ENCODE measurements at regions of chr3 and their contacts with region 1.

Region 1: GRCh38 chr3:41997702-41998550 is 36.0 kb upstream of the ULK4 start:
- DNase-seq: peak in 1 of 2 experiments; percentile 75
- H3K4me3 ChIP-seq: no peak overlapping the region
- H3K27ac ChIP-seq: no peak overlapping the region
- H3K4me1 ChIP-seq: peaks cover 0 to 2% (median under 1%) of the 10 kb centered on the region in 4 experiments; a peak in 3 of 7 replicates
- H3K27me3 ChIP-seq: no peaks in the 10 kb centered on the region
- CTCF ChIP-seq: peak in 2 of 3 experiments; percentile 50 to 68; a peak in 3 of 4 replicates
- EP300 ChIP-seq: no peak
- POLR2A ChIP-seq: no peak
- RAD21 ChIP-seq: peak; percentile 48 to 65

Region 2: DNA sequence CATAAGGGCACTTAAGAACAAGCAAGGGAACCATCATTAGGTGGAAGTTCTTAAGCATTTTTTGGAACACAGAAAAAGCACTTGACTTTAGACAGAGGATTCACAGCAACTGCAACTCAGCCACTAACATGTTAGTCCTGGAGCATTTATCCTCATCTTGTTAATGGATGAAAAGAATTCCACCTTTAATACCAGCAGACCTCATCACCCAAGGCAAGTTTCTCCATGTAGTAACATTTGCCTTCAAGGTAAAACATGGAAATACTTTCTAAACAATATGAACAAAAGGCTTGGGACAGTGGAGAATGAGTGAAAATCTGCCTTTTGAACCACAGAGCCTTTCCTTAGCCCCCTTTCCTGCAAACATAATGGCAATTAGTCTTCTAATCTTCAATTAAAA is 28.0 kb before region 1 on chr3:
- CTCF ChIA-PET with region 1: interaction called, 16 read pairs
- POLR2A ChIA-PET with region 1: no interaction called
- DNase-seq: no peak
- H3K4me3 ChIP-seq: no peak overlapping the region
- H3K27ac ChIP-seq: no peak overlapping the region
- H3K4me1 ChIP-seq: no peaks in the 10 kb centered on the region
- H3K27me3 ChIP-seq: no peaks in the 10 kb centered on the region
- CTCF ChIP-seq: no peak
- EP300 ChIP-seq: no peak
- POLR2A ChIP-seq: no peak
- RAD21 ChIP-seq: no peak

Region 3: DNA sequence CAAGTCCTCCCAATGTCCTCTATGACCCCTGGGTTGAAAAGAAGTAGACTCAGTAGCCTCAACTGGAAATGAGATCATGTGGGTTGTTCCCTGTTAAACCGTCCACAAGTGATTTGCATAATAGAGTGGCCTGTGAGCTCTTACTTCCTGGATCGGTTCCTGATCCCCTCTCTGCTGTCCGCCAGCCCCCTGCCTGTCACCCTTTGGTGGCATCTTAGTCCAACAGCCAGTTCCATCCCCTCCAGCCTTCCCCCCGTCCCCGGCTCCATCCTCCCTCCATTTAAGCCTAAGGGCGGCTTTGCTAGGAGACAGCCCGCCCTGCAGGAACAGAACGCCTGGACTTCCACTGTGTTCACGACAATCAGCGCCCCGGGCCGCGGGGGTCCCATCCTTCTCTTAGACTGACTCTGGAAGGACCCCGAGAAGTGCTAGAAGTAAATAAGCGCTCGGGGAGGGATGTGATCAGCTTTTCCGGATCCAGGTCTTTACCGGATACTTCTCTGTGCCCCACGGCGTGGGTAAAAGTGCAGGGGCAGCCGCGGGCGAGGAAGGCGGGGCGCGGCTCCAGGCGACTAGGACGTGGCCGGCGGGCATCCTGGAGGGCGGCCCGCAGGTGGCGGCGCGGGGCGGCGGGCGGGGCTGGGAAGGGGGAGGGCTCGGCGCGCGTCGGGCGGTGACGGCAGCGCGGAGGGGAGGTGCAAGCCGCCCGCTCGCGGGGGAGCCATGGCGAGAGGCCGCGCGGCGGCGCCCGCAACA is 15.2 kb after region 1 on chr3:
- CTCF ChIA-PET with region 1: interaction called, 42 read pairs
- POLR2A ChIA-PET with region 1: no interaction called
- DNase-seq: peak in 1 of 2 experiments; percentile 72
- H3K4me3 ChIP-seq: peak overlapping the region; percentile 75 to 95 (median 80)
- H3K27ac ChIP-seq: no peak overlapping the region
- H3K4me1 ChIP-seq: peaks cover 5 to 7% (median 6%) of the 10 kb centered on the region in 4 experiments; a peak in 6 of 7 replicates
- H3K27me3 ChIP-seq: peaks cover 0 to 7% (median 4%) of the 10 kb centered on the region in 4 experiments; a peak in 4 of 7 replicates
- CTCF ChIP-seq: no peak; a peak in 1 of 4 replicates
- EP300 ChIP-seq: no peak
- POLR2A ChIP-seq: peak in 1 of 2 experiments; percentile 23; a peak in 1 of 3 replicates
- RAD21 ChIP-seq: no peak

Region 4: DNA sequence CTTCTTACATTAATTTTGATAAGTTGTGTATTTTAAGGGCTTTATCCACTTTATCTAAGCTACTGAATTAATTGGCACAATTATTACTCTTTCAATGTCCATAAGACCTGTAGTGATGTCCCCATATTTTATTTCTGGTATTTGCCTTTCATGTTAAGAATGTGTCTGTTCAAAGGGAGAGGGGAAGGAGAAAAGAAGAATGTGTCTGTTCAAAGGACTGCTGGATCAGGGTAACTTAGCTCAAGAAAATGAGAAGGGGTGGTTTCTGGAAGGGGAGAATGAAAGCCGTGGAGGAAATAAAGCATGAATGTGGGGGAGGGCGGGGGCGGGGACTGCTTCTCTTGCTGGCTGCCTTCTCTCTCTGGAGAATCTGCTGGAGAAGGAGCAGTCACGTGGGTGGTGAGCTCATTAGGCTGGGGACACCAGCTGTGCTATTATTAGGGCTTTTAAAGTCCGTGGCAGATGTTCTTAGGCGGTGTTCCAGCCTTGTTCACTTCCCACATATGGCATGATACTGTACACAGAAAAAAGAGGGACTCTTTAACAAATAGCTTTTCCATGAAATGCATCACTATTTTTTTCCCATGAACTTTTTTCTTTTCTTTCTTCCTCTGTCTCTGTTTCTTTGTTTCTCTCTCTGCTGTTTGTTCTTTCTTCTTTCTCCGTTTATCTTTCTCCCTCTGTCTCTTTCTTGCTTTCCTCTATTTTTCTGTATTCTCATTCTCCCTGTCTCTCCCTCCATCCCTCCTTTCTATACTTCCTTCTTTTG is 27.6 kb after region 1 on chr3:
- CTCF ChIA-PET with region 1: interaction called, 19 read pairs
- POLR2A ChIA-PET with region 1: no interaction called
- DNase-seq: peak in 1 of 2 experiments; percentile 63
- H3K4me3 ChIP-seq: peak overlapping the region in 3 of 4 experiments; percentile 27 to 49 (median 29); a peak in 5 of 8 replicates
- H3K27ac ChIP-seq: peak overlapping the region; percentile 72; the same call in 1 of the 2 replicates
- H3K4me1 ChIP-seq: peaks cover 0 to 18% (median 14%) of the 10 kb centered on the region in 4 experiments; a peak in 4 of 7 replicates
- H3K27me3 ChIP-seq: no peaks in the 10 kb centered on the region
- CTCF ChIP-seq: no peak
- EP300 ChIP-seq: no peak; a peak in 1 of 3 replicates
- POLR2A ChIP-seq: peak; percentile 39 to 63
- RAD21 ChIP-seq: no peak; a peak in 2 of 4 replicates

Region 5: DNA sequence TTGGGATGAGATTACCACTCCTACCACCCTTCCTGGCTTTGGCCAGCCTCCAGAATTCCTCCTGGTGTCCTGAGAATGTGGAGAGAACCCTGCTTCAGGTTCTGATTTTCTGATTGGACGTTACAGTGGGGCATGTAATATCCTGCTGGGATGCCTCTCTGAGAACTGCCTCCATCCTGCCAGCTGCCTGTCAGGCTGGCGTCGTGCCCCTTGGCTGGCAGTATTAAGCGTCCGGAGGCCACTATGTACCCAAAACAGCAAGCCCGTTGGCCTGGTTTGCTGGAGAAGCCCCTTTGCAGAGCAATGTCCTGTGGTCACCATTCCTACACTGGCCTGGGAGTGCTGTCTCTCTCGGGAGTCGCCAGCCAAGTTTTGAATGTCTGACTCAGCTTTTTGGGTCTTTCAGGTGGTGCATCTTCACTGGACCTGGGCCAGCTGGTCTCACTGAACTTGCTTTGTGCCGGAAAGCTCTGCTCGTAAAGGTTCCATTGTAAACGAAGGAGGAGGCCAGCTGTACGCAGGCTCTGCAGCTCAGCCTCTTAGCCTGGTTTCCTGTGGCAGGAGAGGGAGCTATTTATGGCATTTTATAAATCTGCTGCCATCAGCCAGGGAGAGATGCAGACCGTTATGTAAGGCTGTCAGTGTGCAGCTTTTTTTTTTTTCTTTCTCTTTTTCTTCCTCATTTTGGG is 74.1 kb after region 1 on chr3:
- CTCF ChIA-PET with region 1: interaction called, 12 read pairs
- POLR2A ChIA-PET with region 1: no interaction called
- DNase-seq: no peak
- H3K4me3 ChIP-seq: no peak overlapping the region
- H3K27ac ChIP-seq: peak overlapping the region; percentile 2; the same call in 1 of the 2 replicates
- H3K4me1 ChIP-seq: peaks cover 0 to 13% (median 10%) of the 10 kb centered on the region in 4 experiments; a peak in 4 of 7 replicates
- H3K27me3 ChIP-seq: no peaks in the 10 kb centered on the region
- CTCF ChIP-seq: no peak
- EP300 ChIP-seq: no peak
- POLR2A ChIP-seq: no peak
- RAD21 ChIP-seq: 0 out of 4 replicates have a peak, but pooled peaks of 1 of the 2 experiments have one; percentile 4

Region 6: GRCh38 chr3:42090973-42091731 is 93.2 kb after region 1 on chr3 and contains the start of gene TRAK1:
- CTCF ChIA-PET with region 1: interaction called, 14 read pairs
- POLR2A ChIA-PET with region 1: no interaction called
- DNase-seq: no peak
- H3K4me3 ChIP-seq: no peak within 1 kb of the TSS
- H3K27ac ChIP-seq: 0 out of 2 replicates have a peak within 1 kb of the TSS, but pooled peaks have one; percentile 19
- H3K4me1 ChIP-seq: peaks cover 0 to 3% (median 2%) of the 10 kb centered on the region in 4 experiments; a peak in 3 of 7 replicates
- H3K27me3 ChIP-seq: no peaks in the 10 kb centered on the region
- CTCF ChIP-seq: no peak
- EP300 ChIP-seq: no peak
- POLR2A ChIP-seq: no peak
- RAD21 ChIP-seq: no peak; a peak in 1 of 4 replicates
- total RNA-seq, gene TRAK1: 32.7 and 35.4 TPM in 2 replicates

Measured in H1 (cell line).